ENCODE measurements at regions of chr1 and their contacts with region 1.

Region 1: GRCh38 chr1:198520524-198521254 is 19.8 kb downstream of the ATP6V1G3 start:
- DNase-seq: no peak
- H3K4me3 Mint-ChIP-seq: peak overlapping the region; percentile 67
- H3K27ac Mint-ChIP-seq: peak overlapping the region; percentile 79
- H3K4me1 Mint-ChIP-seq: peaks cover 78% of the 10 kb centered on the region
- H3K27me3 Mint-ChIP-seq: no peaks in the 10 kb centered on the region

Region 2: DNA sequence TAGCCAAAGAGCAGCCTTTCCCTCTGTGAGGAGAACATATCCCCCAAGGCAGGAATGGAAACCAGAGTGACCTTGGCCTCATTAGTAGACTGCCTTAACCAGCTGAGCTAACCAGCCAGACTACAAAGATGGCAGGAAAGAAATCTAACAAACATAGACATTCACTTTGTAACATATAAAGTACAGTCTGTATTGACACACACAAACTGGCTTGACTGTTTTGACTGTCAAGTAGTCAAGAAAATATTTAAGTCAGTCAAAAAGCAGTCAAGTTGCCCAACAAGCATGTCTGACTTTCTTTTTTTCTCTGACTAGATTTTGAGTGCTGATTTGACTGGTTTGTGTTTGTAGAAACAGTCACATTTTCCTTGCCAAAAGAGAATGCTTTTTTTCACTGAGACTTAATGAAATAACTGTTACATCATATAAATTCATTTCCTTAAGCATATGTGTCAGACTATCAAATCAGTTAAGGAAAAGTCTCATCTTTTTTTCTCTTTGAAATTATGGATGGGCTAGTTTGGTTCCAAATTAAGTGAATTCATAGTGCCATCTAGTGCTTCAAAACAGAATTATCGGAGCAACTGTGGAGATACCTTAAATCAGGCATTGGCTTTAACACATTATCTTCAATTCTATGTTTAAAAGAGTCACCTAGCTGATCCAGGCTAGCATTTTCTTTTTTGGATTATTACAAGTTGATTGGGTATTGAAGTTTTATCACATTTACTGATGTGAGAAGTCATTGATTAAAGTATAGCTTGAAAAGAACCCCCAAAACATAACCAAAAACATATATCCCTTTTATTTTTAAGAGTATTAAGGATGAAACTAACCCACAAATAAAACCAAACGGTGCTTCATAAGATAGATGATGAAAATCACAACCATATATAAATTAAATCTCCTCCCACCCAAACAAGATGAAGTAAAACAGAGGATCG is 55.2 kb before region 1 on chr1:
- CTCF ChIA-PET with region 1: no interaction called
- POLR2A ChIA-PET with region 1: no interaction called
- intact Hi-C with region 1: loop called (anchors 2 kb)
- DNase-seq: no peak
- H3K4me3 Mint-ChIP-seq: no peak overlapping the region
- H3K27ac Mint-ChIP-seq: no peak overlapping the region
- H3K4me1 Mint-ChIP-seq: peaks cover 12% of the 10 kb centered on the region
- H3K27me3 Mint-ChIP-seq: no peaks in the 10 kb centered on the region

Region 3: GRCh38 chr1:198497346-198498102 is 23.2 kb before region 1 on chr1:
- CTCF ChIA-PET with region 1: no interaction called
- POLR2A ChIA-PET with region 1: no interaction called
- intact Hi-C with region 1: no loop called
- DNase-seq: no peak
- H3K4me3 Mint-ChIP-seq: no peak overlapping the region
- H3K27ac Mint-ChIP-seq: no peak overlapping the region
- H3K4me1 Mint-ChIP-seq: peaks cover 13% of the 10 kb centered on the region
- H3K27me3 Mint-ChIP-seq: no peaks in the 10 kb centered on the region

Region 4: DNA sequence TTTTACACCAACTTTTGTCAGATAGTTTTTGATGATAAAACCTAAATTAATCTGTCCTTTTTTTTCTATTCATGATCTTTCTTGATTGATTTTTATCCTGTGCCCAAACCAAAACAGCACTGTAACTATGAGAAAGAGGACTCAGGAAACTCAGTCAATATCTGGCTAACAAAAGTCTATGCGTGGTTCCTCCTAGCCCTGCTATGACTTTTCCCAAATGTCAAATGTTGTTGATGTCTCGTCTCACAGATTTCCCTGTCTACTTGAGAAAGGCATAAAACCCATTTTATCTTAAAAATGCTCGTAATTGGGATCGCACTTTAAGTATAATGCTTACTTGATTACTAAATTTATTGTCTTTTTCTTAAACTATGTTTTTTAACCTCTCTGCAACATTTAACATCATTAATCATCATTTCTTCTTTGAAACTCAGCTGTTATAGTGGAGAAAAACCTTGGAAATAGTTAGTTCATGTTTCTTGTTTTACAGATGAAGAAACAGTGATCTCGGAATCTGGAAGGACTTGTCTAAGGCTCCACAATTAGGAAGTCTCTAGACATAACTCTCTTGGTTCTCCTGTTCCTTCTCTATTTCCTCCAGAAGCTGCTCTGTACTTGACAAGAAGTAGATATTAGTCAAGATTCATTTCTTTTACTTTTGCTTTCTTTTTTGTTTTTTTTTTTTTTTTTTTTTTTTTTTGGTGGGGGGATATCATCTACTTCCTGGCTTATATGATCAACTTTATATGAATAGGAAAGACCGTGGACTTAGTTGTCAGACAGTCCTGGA is 92.0 kb after region 1 on chr1:
- CTCF ChIA-PET with region 1: interaction called, 10 read pairs
- POLR2A ChIA-PET with region 1: interaction called, 4 read pairs
- intact Hi-C with region 1: loop called (anchors 2 kb)
- DNase-seq: no peak
- H3K4me3 Mint-ChIP-seq: peak overlapping the region; percentile 79
- H3K27ac Mint-ChIP-seq: peak overlapping the region; percentile 97
- H3K4me1 Mint-ChIP-seq: peaks cover 71% of the 10 kb centered on the region
- H3K27me3 Mint-ChIP-seq: no peaks in the 10 kb centered on the region

Region 5: GRCh38 chr1:198681831-198682759 is 161.4 kb after region 1 on chr1:
- CTCF ChIA-PET with region 1: interaction called, 10 read pairs
- POLR2A ChIA-PET with region 1: interaction called, 5 read pairs
- intact Hi-C with region 1: loop called (anchors 1 kb)
- DNase-seq: peak; percentile 89
- H3K4me3 Mint-ChIP-seq: peak overlapping the region; percentile 48
- H3K27ac Mint-ChIP-seq: peak overlapping the region; percentile 95
- H3K4me1 Mint-ChIP-seq: peaks cover 84% of the 10 kb centered on the region
- H3K27me3 Mint-ChIP-seq: no peaks in the 10 kb centered on the region

Region 6: GRCh38 chr1:198937231-198938031 is 416.7 kb after region 1 on chr1:
- CTCF ChIA-PET with region 1: no interaction called
- POLR2A ChIA-PET with region 1: no interaction called
- intact Hi-C with region 1: loop called (anchors 5 kb)
- DNase-seq: peak; percentile 53
- H3K4me3 Mint-ChIP-seq: peak overlapping the region; percentile 84
- H3K27ac Mint-ChIP-seq: peak overlapping the region; percentile 77
- H3K4me1 Mint-ChIP-seq: peaks cover 23% of the 10 kb centered on the region
- H3K27me3 Mint-ChIP-seq: no peaks in the 10 kb centered on the region

Measured in activated CD4-positive, alpha-beta memory T cell treated with anti-CD3 and anti-CD28 coated beads for 36 hours (primary cell).